HAP-1 (cell line): ENCODE measurements at regions of chr5 and their contacts with region 1.

Region 1: DNA sequence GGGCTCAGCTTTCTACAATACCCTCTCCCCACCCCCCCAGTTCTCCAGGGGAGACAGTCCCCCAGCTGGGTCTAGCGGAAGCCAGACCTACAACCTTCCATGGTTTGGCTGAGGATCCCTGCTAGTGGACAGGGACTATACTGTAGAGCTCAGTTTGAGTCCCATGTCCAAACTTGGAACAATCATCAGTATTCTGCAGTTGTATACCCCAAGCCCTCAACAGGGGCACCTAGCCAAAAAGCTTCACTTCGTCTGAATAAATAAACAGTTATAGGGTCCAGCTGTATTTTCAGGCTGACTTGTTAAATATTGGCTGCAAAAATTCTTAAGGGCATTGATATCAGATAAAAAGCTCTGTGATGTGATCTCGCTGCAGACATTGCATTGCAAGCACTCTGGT is 15.4 kb upstream of the C9 start:
- DNase-seq: no peak
- H3K4me3 ChIP-seq: no peak overlapping the region
- H3K4me1 ChIP-seq: no peaks in the 10 kb centered on the region
- H3K27me3 ChIP-seq: no peaks in the 10 kb centered on the region

Region 2: DNA sequence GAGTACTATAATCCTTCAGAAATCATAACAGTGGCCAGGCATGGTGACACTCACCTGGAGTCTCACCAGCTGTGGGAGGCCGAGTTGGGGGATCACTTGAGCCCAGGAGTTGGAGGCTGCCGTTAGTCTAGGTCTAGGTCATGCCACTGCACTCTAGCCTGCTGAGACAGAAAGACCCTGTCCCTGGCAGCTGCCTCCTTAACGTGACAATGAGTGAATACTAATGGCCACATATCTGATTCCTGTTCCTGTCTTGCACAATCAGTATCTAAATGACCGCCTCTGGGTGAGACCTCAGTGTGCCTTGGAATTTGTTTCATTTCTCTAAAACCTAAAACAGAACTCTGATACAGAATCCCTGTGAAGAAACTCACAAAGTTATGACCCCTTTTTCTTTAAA is 176.1 kb after region 1 on chr5:
- in situ Hi-C with region 1: loop called (anchors 10 kb)
- DNase-seq: no peak
- H3K4me3 ChIP-seq: no peak overlapping the region
- H3K4me1 ChIP-seq: no peaks in the 10 kb centered on the region
- H3K27me3 ChIP-seq: no peaks in the 10 kb centered on the region